ENCODE measurements at regions of chr3 and their contacts with region 1.

Region 1: DNA sequence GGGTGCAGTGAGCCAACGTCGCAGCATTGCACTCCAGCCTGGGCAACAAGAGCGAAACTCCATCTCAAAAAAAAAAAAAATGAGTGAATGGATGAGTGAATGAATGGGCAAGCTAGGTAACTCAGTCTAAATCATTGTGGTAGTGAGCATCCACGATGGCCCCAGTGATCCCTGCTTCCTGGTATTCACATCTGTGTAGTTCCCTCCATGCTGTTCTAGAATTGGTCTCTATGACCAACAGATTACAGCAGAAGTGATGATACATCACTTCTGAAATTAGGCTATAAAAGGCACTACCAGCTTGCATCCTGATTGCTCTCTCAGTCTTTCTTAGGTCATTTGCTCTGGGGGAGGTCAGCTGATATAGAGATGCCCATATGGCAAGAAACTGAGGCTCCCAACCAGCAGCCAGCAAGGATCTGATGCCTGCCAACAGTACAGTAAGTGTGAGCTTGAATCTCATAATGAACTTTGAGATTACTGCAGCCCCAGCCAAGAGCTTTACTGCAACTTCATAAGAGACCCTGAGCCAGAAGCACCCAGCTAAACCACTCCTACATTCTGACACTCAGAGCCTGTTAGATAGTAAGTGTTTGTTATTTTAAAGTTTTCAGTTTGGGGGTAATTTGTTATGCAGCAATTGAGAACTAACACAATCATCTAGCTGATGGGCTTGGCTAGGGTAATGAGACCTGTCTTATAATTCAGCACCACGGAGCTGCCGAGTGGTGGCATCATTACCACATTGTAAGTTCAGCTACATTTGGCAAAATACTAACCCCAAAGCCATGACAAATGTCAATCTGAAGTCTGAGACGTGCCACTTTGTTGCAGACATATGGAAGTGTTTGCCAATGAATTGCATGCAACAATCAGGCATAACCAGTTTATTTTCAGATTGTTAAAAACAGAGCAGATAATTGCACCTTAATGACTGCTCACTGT is 53.0 kb downstream of the KLHL6 start:
- DNase-seq: no peak
- H3K4me3 ChIP-seq: no peak overlapping the region
- H3K27ac ChIP-seq: no peak overlapping the region
- H3K4me1 ChIP-seq: peaks cover 0 to 2% (median 0%) of the 10 kb centered on the region in 4 experiments; a peak in 1 of 7 replicates
- H3K27me3 ChIP-seq: no peaks in the 10 kb centered on the region
- CTCF ChIP-seq: no peak
- EP300 ChIP-seq: no peak
- POLR2A ChIP-seq: no peak
- RAD21 ChIP-seq: peak in 1 of 2 experiments; percentile 39; a peak in 3 of 4 replicates

Region 2: DNA sequence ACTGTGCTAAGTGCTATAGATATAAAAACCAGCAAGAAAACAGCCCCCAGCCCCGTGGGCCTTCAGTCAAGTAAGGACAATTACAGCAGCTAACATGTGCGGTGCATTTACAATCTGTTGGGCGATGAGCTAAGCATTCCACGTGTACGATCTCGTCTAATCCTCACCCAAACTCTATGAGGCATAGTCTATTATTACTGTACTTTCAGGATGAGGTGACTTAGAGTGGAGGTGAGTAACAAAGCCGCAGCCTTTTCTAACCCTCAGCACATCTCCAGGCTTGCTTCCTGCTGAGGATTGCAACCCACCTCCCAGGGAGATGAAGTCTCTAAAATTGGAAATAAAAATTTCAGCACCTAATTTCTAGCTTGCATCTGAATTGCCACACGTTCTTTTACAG is 20.9 kb before region 1 on chr3:
- CTCF ChIA-PET with region 1: interaction called, 19 read pairs
- POLR2A ChIA-PET with region 1: interaction called, 8 read pairs
- DNase-seq: peak in 1 of 2 experiments; percentile 6
- H3K4me3 ChIP-seq: no peak overlapping the region
- H3K27ac ChIP-seq: no peak overlapping the region
- H3K4me1 ChIP-seq: peaks cover 0 to 7% (median 3%) of the 10 kb centered on the region in 4 experiments; a peak in 2 of 7 replicates
- H3K27me3 ChIP-seq: no peaks in the 10 kb centered on the region
- CTCF ChIP-seq: no peak
- EP300 ChIP-seq: no peak
- POLR2A ChIP-seq: no peak
- RAD21 ChIP-seq: no peak